ENCODE measurements at regions of chr7 and their contacts with region 1.

Region 1: DNA sequence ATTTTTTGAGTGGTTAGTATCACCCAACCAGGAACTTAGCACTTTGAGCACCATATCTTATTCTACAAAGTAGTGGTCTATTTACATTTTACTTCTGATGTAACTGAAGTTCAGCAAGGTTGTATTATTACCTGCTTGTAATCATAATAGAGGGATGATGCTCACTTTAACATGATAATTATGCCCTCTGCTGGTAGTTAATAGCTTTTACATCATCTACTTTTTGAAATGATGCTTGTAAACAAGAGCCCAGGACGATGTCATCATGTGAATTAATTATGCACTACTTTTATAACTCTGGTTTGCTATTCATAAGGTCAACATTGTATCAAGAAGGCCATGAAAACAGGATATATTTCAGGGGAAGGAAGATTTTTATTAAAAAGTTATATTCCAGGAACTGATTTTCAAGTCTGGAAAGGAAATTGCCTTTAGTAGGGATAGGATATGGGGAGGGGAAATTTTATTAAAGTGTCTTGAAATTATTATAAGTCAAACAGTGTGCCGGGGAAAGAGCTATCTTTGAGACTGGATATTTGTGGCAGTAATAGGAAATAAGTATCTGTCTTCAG is 80.3 kb upstream of the SCIN start:
- DNase-seq: peak; percentile 51
- H3K4me3 ChIP-seq: no peak overlapping the region
- H3K27ac ChIP-seq: no peak overlapping the region
- H3K4me1 ChIP-seq: peaks cover 8% of the 10 kb centered on the region
- H3K27me3 ChIP-seq: no peaks in the 10 kb centered on the region
- CTCF ChIP-seq: peak; percentile 62

Region 2: GRCh38 chr7:11427686-11428273 is 1062.4 kb before region 1 on chr7:
- CTCF ChIA-PET with region 1: no interaction called
- POLR2A ChIA-PET with region 1: no interaction called
- intact Hi-C with region 1: loop called (anchors 5 kb)
- DNase-seq: peak; percentile 74
- H3K4me3 ChIP-seq: no peak overlapping the region
- H3K27ac ChIP-seq: no peak overlapping the region
- H3K4me1 ChIP-seq: no peaks in the 10 kb centered on the region
- H3K27me3 ChIP-seq: no peaks in the 10 kb centered on the region
- CTCF ChIP-seq: peak; percentile 87

Region 3: DNA sequence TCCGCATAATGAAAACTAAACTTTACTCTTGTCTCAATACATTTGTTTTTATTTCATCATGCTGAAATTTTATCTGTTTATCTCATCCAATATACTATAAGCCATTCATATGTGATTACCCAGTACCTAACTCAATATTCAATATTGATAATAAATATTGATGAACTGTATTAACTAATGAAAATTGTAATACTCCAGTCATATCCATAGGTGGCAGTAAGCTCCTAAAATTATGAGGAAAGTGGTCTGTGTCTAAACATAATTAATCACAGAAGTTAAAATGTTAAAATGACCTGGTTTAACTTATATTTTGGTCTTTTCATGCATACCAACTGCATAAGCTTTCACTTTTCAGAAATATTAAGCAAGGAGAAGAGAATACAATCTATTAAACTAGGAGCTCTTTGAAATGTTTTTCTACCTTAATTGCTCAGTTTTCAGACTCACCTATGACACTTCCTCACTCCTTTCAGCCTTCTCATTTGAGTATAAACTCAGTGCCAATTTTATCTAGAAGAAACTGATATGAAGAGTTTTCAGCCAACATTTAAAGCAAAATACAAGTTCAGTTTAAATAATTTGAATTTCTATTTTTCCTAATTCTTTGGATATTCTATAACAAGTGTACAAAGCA is 56.1 kb before region 1 on chr7:
- CTCF ChIA-PET with region 1: interaction called, 7 read pairs
- POLR2A ChIA-PET with region 1: no interaction called
- intact Hi-C with region 1: loop called (anchors 2 kb)
- DNase-seq: no peak
- H3K4me3 ChIP-seq: no peak overlapping the region
- H3K27ac ChIP-seq: no peak overlapping the region
- H3K4me1 ChIP-seq: no peaks in the 10 kb centered on the region
- H3K27me3 ChIP-seq: no peaks in the 10 kb centered on the region
- CTCF ChIP-seq: peak; percentile 68

Region 4: GRCh38 chr7:12458520-12459131 is 31.6 kb before region 1 on chr7:
- CTCF ChIA-PET with region 1: interaction called, 24 read pairs
- POLR2A ChIA-PET with region 1: no interaction called
- intact Hi-C with region 1: loop called (anchors 1 kb)
- DNase-seq: peak; percentile 70
- H3K4me3 ChIP-seq: no peak overlapping the region
- H3K27ac ChIP-seq: no peak overlapping the region
- H3K4me1 ChIP-seq: peaks cover 8% of the 10 kb centered on the region
- H3K27me3 ChIP-seq: no peaks in the 10 kb centered on the region
- CTCF ChIP-seq: peak; percentile 77